Transverse colon (tissue), 4 donors: ENCODE measurements at regions of chr7 and their contacts with region 1.

Region 1: DNA sequence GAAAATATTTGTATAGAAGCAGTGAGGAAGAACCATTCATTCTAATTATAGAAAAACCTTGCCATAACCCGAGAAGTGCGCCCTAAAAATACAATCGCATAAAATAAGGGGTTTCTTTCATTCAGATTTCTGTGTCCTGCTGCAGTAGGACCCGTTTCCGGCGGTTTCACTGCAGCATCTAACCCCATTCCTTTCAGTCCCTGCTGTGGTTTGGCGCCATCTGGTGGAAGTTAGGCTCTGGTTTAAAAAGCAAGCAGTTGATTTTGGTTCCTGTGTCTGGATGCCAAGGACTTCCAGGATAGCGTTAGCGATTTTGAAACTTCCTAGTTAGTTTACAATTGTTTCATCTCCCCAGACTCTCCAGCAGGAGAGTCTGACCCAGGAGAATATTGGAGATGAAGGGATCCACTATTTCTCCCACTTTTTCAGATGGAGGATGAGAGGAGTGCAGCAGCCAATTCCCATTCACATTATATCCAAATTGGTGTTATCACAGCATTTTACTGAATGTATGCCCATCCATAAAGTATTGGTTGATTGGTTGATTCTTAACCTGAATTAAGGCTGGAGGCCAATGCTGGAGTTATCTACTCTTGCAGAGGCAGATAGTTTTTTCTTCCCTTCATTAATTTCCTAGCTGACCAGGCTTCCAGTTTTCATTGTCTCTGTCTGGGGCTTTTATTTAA is 128.8 kb upstream of the CACNA2D1 start:
- DNase-seq: peak; percentile 83
- H3K4me3 ChIP-seq: no peak overlapping the region
- H3K27ac ChIP-seq: no peak overlapping the region
- H3K4me1 ChIP-seq: no peaks in the 10 kb centered on the region
- H3K27me3 ChIP-seq: no peaks in the 10 kb centered on the region
- CTCF ChIP-seq: peak; percentile 75 to 90 (median 86)
- EP300 ChIP-seq: no peak
- POLR2A ChIP-seq: no peak

Region 2: DNA sequence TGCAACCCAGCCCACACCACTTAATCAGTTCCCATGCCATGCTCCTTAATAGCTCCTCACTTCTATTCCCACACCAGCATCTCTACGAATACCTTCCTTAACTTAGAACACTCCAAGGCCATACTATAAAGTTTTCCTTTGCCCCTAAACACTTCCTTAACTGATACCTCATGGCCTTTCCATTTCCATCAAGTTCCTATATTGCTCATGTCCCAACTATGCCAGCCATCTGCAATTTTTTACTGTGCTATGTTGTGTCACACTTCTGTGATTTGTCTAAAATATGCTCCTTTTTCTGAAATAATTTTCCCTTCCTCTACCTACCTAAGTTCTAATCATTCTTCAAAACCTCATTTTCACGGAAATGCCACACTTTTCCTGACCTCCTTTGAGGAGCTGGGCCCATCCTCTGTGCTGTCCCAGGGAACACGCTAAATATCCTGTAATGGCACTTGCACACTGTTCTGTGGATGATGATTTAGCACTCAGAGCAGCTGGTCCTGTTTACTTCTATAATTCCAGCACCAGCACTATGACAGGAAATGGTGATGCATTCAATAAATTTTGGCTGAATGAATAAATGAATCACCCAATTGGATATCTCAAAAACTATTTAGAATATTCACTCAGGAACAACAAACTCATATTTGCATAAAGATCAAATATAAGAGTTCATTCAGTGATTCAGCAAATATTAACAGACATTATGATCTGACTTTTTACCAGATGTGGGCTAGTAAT is 536.0 kb before region 1 on chr7:
- in situ Hi-C with region 1: loop called in 3 of 4 experiments (anchors 10 to 25 kb)
- intact Hi-C with region 1: loop called (anchors 10 kb)
- DNase-seq: no peak
- H3K4me3 ChIP-seq: no peak overlapping the region
- H3K27ac ChIP-seq: no peak overlapping the region
- H3K4me1 ChIP-seq: no peaks in the 10 kb centered on the region
- H3K27me3 ChIP-seq: no peaks in the 10 kb centered on the region
- CTCF ChIP-seq: no peak
- EP300 ChIP-seq: no peak
- POLR2A ChIP-seq: no peak

Region 3: GRCh38 chr7:82044497-82045080 is 527.7 kb before region 1 on chr7:
- in situ Hi-C with region 1: loop called in 3 of 4 experiments (anchors 10 to 25 kb)
- intact Hi-C with region 1: loop called (anchors 10 kb)
- DNase-seq: peak; percentile 14
- H3K4me3 ChIP-seq: no peak overlapping the region
- H3K27ac ChIP-seq: no peak overlapping the region
- H3K4me1 ChIP-seq: peaks cover 0 to 5% (median 0%) of the 10 kb centered on the region in 4 donors
- H3K27me3 ChIP-seq: no peaks in the 10 kb centered on the region
- CTCF ChIP-seq: peak; percentile 56 to 76 (median 61)
- EP300 ChIP-seq: no peak
- POLR2A ChIP-seq: no peak

Region 4: GRCh38 chr7:82234457-82235049 is 337.8 kb before region 1 on chr7:
- in situ Hi-C with region 1: loop called in 1 of 4 experiments (anchors 25 kb)
- intact Hi-C with region 1: loop called (anchors 10 kb)
- DNase-seq: no peak
- H3K4me3 ChIP-seq: no peak overlapping the region
- H3K27ac ChIP-seq: no peak overlapping the region
- H3K4me1 ChIP-seq: no peaks in the 10 kb centered on the region
- H3K27me3 ChIP-seq: no peaks in the 10 kb centered on the region
- CTCF ChIP-seq: peak; percentile 33 to 61 (median 52)
- EP300 ChIP-seq: no peak
- POLR2A ChIP-seq: no peak

Region 5: GRCh38 chr7:82406937-82407336 is 165.4 kb before region 1 on chr7:
- in situ Hi-C with region 1: no loop called
- intact Hi-C with region 1: no loop called
- DNase-seq: no peak
- H3K4me3 ChIP-seq: no peak overlapping the region
- H3K27ac ChIP-seq: no peak overlapping the region
- H3K4me1 ChIP-seq: no peaks in the 10 kb centered on the region
- H3K27me3 ChIP-seq: no peaks in the 10 kb centered on the region
- CTCF ChIP-seq: no peak
- EP300 ChIP-seq: no peak
- POLR2A ChIP-seq: no peak

Region 6: GRCh38 chr7:82542665-82543064 is 29.7 kb before region 1 on chr7:
- in situ Hi-C with region 1: no loop called
- intact Hi-C with region 1: no loop called
- DNase-seq: no peak
- H3K4me3 ChIP-seq: no peak overlapping the region
- H3K27ac ChIP-seq: no peak overlapping the region
- H3K4me1 ChIP-seq: no peaks in the 10 kb centered on the region
- H3K27me3 ChIP-seq: no peaks in the 10 kb centered on the region
- CTCF ChIP-seq: no peak
- EP300 ChIP-seq: no peak
- POLR2A ChIP-seq: no peak